ENCODE measurements at regions of chr11 and their contacts with region 1.

Region 1: DNA sequence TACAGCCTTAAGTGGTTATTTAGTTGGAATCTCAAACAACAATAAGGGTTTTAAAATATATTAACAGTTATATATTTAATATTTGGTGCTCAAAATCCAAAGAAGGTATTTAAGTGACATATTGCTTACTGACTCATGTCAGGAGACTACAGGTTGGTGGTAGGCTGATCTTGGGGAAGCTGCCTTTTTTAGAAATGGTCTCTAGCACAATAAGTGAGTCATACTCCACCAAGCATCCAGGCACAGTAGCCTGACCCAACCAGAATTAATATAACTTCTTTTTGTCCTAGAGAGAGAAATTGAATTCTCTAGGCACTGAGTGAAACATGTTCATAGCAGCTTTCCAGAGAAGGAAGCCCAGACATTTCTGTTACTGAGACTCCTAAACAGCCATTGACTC is 868.5 kb upstream of the TENM4 start:
- DNase-seq: no peak
- H3K4me3 ChIP-seq: no peak overlapping the region
- CTCF ChIP-seq: no peak
- POLR2A ChIP-seq: no peak

Region 2: GRCh38 chr11:79925570-79925969 is 383.7 kb before region 1 on chr11:
- intact Hi-C with region 1: no loop called
- DNase-seq: no peak
- H3K4me3 ChIP-seq: no peak overlapping the region
- CTCF ChIP-seq: no peak
- POLR2A ChIP-seq: no peak

Region 3: GRCh38 chr11:80822308-80822707 is 513.0 kb after region 1 on chr11:
- intact Hi-C with region 1: loop called (anchors 5 kb)
- DNase-seq: no peak
- H3K4me3 ChIP-seq: no peak overlapping the region
- CTCF ChIP-seq: no peak
- POLR2A ChIP-seq: no peak